ENCODE measurements at regions of chr4 and their contacts with region 1.

Region 1: DNA sequence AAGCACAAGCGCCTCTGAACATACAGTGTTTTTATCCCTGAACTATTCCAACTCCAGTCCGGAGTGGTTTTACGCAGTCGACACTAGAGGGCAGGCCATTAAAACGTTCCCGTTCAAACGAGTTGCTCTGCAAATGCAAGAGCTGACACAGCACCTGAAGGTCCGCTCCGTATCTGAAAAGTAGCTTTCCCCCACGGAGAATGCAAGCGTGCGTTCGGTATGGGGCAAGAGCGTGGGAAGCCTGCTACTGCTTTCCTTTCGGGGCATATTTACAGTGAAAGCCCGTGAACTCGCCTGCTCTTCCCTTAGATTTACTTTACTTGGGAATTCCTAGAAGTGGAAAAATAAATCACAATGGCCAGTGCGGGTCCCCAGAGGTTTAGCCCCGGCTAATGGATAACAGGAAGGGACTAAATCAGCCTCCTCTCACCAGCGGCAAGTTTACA is 190.8 kb downstream of the TSPAN5 start:
- DNase-seq: peak; percentile 55 to 75 (median 63)
- ATAC-seq: peak; percentile 98
- H3K4me3 ChIP-seq: no peak overlapping the region
- H3K4me1 ChIP-seq: no peaks in the 10 kb centered on the region
- CTCF ChIP-seq: peak; percentile 72

Region 2: DNA sequence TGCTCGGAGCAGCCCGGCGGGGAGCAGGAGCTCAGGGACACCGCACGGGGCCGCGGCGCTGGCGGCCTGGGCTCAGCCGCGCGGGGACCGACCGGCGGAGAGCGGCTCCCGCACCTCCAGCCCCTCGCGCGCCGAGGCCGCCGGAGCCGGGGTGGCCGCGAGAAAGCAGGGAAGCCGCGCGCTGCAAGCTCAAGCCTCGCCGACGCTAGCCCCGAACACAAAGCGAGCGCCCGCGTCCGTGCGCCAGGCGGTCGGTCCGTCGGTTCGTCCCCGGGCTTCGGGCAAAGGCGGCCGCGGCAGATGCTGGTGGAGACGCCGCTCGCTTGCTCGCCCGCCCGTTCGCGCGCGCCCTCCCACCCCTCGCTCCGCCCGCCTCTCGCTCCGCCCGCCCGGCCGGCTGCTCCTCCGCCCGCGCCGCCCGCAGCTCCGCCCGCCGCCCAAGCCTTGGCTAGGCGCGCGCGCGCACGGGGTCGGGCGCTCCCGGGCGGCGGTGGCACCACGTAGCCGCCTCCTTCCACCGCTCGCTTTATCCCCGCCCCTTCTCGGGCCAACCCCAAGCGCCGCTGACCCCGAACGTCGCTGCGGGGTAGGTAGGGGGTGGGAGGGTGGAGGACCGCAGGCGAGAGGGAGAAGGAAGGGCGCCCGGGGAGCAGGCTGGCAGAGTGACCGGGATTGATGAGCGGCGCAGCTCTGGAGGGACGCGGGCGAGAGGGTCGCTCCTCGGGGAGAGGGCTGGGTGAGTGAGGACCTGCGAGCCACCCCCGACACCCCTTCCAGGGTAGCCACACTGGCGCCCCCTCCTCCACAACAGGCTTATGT is 190.8 kb after region 1 on chr4 and contains the start of gene TSPAN5:
- intact Hi-C with region 1: loop called in 1 of 2 experiments (anchors 5 kb)
- DNase-seq: peak; percentile 81 to 90 (median 86)
- ATAC-seq: peak; percentile 94
- H3K4me3 ChIP-seq: peak within 1 kb of the TSS; percentile 28
- H3K4me1 ChIP-seq: peaks cover 8% of the 10 kb centered on the region
- CTCF ChIP-seq: no peak
- total RNA-seq, gene TSPAN5: 3.9 to 11.8 (median 4.9) TPM

Measured in mucosa of descending colon (tissue), 3 donors.